ENCODE measurements at regions of chr20 and their contacts with region 1.

Region 1: DNA sequence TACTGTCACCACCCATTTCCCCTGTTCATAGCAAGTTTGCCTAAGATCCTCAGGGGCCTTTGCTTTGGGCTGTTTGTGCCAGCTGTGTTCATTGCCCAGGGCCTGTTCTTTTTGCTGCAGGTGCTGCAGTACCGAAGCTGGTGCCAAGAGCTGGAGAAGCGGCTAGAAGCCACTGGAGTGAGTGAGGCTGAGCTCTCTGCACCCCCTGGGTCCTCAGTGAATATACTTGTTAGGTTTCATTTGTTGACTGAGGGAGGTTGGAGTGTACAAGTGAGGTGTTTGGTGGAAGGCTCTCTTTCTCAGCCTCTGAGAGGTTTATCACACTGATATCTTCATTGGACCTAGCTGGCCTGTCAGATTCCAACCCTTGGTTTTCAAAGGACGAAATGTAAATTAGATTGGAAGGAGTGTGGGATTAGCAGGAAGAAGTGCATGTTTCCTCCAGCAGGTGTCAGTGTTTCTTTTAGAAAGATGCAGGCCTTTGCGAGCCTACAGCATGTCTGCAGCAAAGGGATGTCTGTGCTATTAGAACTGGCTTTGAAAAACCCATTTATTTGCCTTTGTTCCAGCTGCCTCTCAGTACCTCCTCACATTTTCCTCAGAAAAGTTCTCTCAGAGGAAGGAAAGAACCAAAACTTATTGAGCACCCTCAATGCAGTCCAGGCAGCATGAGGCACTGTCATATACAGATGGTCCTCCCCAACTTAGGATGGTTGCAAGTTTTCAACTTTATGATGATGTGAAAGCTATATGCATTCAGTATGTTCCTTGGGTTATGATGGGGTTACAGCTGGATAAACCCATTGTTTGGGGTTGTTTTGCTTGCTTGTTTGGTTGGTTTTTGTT is 8.3 kb downstream of the CEP250 start:
- DNase-seq: peak; percentile 29
- H3K4me3 ChIP-seq: no peak overlapping the region
- H3K27ac ChIP-seq: no peak overlapping the region
- H3K4me1 ChIP-seq: no peaks in the 10 kb centered on the region
- H3K27me3 ChIP-seq: no peaks in the 10 kb centered on the region
- CTCF ChIP-seq: peak; percentile 71 to 78

Region 2: GRCh38 chr20:35523298-35523888 is 59.7 kb after region 1 on chr20:
- CTCF ChIA-PET with region 1: no interaction called
- dilution Hi-C with region 1: no loop called
- in situ Hi-C with region 1: no loop called
- intact Hi-C with region 1: loop called (anchors 5 kb)
- DNase-seq: peak; percentile 23
- H3K4me3 ChIP-seq: no peak overlapping the region
- H3K27ac ChIP-seq: no peak overlapping the region
- H3K4me1 ChIP-seq: no peaks in the 10 kb centered on the region
- H3K27me3 ChIP-seq: no peaks in the 10 kb centered on the region
- CTCF ChIP-seq: peak; percentile 66 to 74

Region 3: DNA sequence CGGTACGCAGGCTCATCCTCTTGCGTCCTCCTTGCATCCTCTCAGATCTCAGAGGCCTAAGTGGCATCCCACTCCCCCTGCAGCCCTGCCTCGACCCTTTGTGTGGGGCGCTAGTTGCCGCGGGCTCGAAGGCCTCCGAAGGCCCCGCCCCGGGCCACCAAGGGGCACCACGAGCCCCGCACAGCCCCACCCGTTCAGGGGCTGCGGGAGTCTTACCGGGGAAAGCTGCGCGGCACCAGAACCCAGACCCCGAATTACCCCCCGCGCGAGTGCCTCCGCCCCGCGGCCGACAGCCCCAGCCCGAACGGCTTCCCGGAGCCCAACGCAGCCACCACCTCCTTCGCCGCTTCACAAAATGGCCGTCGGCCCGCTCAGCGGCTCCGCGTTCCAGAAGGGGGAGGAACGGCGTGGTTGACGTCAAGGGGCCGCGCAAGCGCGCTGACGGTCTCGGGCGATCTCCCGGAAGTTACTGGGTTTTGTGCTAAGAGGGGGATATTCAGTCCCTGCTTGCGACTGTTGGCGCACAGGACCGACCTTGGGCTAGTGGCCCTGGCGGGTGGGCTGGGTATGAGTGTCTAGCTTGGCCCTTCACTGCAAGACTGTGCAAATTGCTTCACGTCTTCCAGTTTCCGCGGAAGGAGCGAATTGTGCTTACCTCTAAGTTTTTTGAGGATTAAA is 201.0 kb after region 1 on chr20 and contains the starts of genes CPNE1 and RBM12:
- CTCF ChIA-PET with region 1: no interaction called
- dilution Hi-C with region 1: no loop called
- in situ Hi-C with region 1: no loop called
- intact Hi-C with region 1: loop called (anchors 5 kb)
- DNase-seq: peak; percentile 84
- H3K4me3 ChIP-seq: peak within 1 kb of the TSS; percentile 65 to 97 (median 87)
- H3K27ac ChIP-seq: peak within 1 kb of the TSS; percentile 89
- H3K4me1 ChIP-seq: peaks cover 30% of the 10 kb centered on the region
- H3K27me3 ChIP-seq: no peaks in the 10 kb centered on the region
- CTCF ChIP-seq: no peak
- total RNA-seq, gene CPNE1: 110 to 157 TPM
- total RNA-seq, gene RBM12: 62.8 to 71.2 TPM

Region 4: DNA sequence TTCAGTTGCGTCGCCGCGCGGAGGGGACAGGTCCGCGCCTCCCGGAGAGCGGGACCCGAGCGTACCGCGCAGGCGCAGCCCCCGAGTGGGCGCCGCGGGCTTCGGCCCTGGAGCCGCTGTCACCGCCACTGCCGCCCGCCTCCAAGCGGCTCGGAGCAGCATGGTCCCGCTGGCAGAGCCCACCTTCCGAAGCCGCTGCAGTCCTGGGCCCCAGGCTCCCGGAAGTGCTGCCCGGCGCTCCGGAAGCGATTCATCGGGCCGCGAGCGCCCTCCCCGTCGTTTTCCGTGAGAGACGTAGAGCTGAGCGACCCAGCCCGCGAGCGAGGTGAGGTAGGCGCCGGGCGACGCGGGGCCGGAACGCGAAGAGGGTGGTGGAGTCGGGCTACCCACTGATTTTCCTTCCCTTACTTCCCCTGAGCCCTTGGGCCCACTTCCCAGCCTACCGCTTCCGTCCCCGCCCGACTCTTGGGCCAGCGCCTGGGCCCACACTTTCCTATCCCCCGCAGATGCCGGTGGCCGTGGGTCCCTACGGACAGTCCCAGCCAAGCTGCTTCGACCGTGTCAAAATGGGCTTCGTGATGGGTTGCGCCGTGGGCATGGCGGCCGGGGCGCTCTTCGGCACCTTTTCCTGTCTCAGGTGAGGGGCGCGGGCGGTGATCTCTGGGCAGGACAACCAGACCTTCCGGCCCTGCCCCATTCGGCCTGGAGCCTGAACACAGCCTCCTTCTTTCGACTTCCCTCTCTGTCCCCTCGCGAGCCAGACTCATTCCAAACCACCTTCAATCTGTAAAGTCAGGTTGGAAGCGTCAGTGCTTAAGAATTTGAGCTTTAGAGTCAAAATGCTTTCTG is 235.7 kb after region 1 on chr20 and contains the starts of genes NFS1 and ROMO1:
- CTCF ChIA-PET with region 1: no interaction called
- dilution Hi-C with region 1: no loop called
- in situ Hi-C with region 1: no loop called
- intact Hi-C with region 1: loop called (anchors 10 kb)
- DNase-seq: peak; percentile 78
- H3K4me3 ChIP-seq: peak within 1 kb of the TSS; percentile 58 to 94 (median 81)
- H3K27ac ChIP-seq: peak within 1 kb of the TSS; percentile 78
- H3K4me1 ChIP-seq: peaks cover 17% of the 10 kb centered on the region
- H3K27me3 ChIP-seq: no peaks in the 10 kb centered on the region
- CTCF ChIP-seq: peak in 1 of 2 donors; percentile 29
- total RNA-seq, gene NFS1: 28.8 to 33.0 TPM
- total RNA-seq, gene ROMO1: 113 to 176 TPM

Measured in mammary epithelial cell (primary cell).